GM10248 (cell line): ENCODE measurements at regions of chr15 and their contacts with region 1.

Region 1: GRCh38 chr15:63945007-63945788 is 101.1 kb downstream of the DAPK2 start:
- DNase-seq: peak; percentile 80
- CTCF ChIP-seq: peak; percentile 84

Region 2: DNA sequence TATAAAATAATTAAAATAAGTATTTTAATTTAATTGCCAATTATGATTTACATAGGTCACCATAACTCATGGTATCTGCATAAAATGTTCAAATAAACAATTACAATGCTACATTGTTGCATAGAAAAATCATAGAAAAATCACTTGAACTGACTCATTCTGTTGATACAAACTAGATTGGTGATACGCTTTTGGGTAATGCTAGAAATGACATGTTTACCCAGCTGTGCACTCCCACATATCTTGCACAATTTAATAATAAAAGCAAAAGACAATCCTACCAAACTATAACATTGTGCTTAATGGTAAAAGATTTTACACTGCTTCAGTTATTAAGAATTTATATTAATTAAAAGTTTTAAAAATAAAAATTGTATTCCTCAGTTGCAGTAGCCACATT is 393.8 kb before region 1 on chr15:
- CTCF ChIA-PET with region 1: no interaction called
- POLR2A ChIA-PET with region 1: no interaction called
- DNase-seq: no peak
- CTCF ChIP-seq: no peak

Region 3: GRCh38 chr15:63896336-63897115 is 48.7 kb before region 1 on chr15:
- CTCF ChIA-PET with region 1: interaction called, 26 read pairs
- POLR2A ChIA-PET with region 1: no interaction called
- DNase-seq: peak; percentile 83
- CTCF ChIP-seq: no peak

Region 4: GRCh38 chr15:63920504-63921175 is 24.6 kb before region 1 on chr15:
- CTCF ChIA-PET with region 1: interaction called, 23 read pairs
- POLR2A ChIA-PET with region 1: no interaction called
- DNase-seq: no peak
- CTCF ChIP-seq: no peak

Region 5: GRCh38 chr15:63933522-63933921 is 11.7 kb before region 1 on chr15:
- CTCF ChIA-PET with region 1: interaction called, 40 read pairs
- POLR2A ChIA-PET with region 1: no interaction called
- DNase-seq: no peak
- CTCF ChIP-seq: no peak

Region 6: GRCh38 chr15:63986751-63987341 is 41.6 kb after region 1 on chr15:
- CTCF ChIA-PET with region 1: interaction called, 39 read pairs
- POLR2A ChIA-PET with region 1: no interaction called
- DNase-seq: peak; percentile 67
- CTCF ChIP-seq: no peak

Region 7: DNA sequence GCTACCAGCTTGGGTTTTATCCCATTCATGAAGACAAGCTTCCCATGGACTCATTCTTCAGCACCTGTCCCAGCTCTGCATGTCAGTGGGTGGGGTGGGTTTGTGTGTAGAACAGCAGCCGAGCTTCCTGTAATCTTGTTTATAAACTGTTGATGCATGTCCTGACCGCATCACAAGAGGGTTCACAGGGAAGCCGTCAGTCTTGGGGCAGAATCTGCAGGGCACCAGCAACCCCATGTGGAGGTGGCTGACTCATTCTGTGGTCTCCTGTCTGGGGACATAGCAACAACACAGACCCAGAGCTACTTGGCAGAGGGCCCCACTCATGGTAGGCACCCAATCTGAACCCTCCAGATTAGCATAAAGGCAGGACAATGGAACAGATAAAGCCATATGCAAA is 65.5 kb after region 1 on chr15:
- CTCF ChIA-PET with region 1: interaction called, 13 read pairs
- POLR2A ChIA-PET with region 1: no interaction called
- DNase-seq: peak; percentile 79
- CTCF ChIP-seq: peak; percentile 40

Region 8: GRCh38 chr15:64046347-64047153 is 101.4 kb after region 1 on chr15 and contains the start of gene DAPK2:
- CTCF ChIA-PET with region 1: interaction called, 68 read pairs
- POLR2A ChIA-PET with region 1: no interaction called
- DNase-seq: peak; percentile 93
- CTCF ChIP-seq: peak; percentile 76